ENCODE measurements at regions of chr12 and their contacts with region 1.

Region 1: GRCh38 chr12:116599285-116600136 is 40.3 kb downstream of the MAP1LC3B2 start:
- DNase-seq: peak; percentile 35
- H3K4me3 Mint-ChIP-seq: no peak overlapping the region
- H3K27ac Mint-ChIP-seq: no peak overlapping the region
- H3K4me1 Mint-ChIP-seq: peaks cover 42% of the 10 kb centered on the region
- H3K27me3 Mint-ChIP-seq: peaks cover 4% of the 10 kb centered on the region

Region 2: GRCh38 chr12:115998119-115998633 is 601.3 kb before region 1 on chr12:
- intact Hi-C with region 1: loop called (anchors 2 kb)
- DNase-seq: no peak
- H3K4me3 Mint-ChIP-seq: no peak overlapping the region
- H3K27ac Mint-ChIP-seq: no peak overlapping the region
- H3K4me1 Mint-ChIP-seq: no peaks in the 10 kb centered on the region
- H3K27me3 Mint-ChIP-seq: no peaks in the 10 kb centered on the region

Region 3: GRCh38 chr12:116142936-116143898 is 456.3 kb before region 1 on chr12:
- intact Hi-C with region 1: loop called (anchors 5 kb)
- DNase-seq: no peak
- H3K4me3 Mint-ChIP-seq: peak overlapping the region; percentile 45
- H3K27ac Mint-ChIP-seq: peak overlapping the region; percentile 81
- H3K4me1 Mint-ChIP-seq: peaks cover 52% of the 10 kb centered on the region
- H3K27me3 Mint-ChIP-seq: no peaks in the 10 kb centered on the region

Region 4: GRCh38 chr12:116497051-116497591 is 102.4 kb before region 1 on chr12:
- intact Hi-C with region 1: no loop called
- DNase-seq: no peak
- H3K4me3 Mint-ChIP-seq: no peak overlapping the region
- H3K27ac Mint-ChIP-seq: no peak overlapping the region
- H3K4me1 Mint-ChIP-seq: peaks cover 6% of the 10 kb centered on the region
- H3K27me3 Mint-ChIP-seq: peaks cover 3% of the 10 kb centered on the region

Region 5: DNA sequence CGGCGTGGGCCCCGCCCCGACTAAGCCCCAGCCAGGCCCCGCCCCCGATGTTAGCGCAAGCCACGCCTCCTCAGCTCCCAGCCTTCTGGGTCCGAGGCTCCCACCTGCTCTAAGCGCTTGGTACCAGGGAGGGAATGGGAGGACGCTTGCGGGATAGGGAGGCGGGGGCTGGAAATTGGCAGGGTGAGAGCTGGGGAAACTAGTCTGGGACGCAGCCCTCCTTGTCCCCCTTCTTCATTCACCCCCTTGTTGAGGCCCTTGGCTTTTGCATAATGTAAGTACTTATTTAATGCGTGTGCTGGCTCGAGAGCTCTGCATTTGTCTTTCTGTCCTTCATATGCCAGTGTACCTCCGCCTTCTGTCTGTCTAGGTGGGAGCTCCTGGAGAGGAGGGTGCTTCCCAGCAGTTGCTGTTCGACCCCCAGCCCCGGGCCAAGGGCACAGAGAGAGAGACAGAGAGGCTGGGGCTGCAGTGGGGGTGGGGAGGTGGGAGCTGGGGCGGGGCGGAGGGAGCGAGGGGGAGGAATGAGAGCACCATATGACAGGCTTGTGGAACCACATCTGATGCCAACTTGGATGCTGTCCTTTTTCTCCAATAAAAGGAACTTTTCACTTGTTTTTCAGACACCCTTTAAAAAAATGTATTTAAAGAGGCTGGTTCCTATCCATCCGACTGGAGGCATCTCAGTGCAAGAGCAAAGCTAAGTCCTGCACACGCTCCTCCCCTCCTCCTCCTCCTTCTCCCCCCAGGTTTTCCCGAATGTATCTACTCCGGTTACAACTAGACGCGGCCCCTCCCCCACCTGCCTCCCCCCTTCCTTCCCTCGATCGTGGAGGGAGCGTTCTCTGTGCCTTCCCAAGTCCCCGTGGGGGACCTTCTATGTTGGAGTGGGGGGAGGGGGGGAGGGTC is 65.9 kb before region 1 on chr12:
- intact Hi-C with region 1: loop called (anchors 10 kb)
- DNase-seq: peak; percentile 60
- H3K4me3 Mint-ChIP-seq: peak overlapping the region; percentile 89
- H3K27ac Mint-ChIP-seq: peak overlapping the region; percentile 75
- H3K4me1 Mint-ChIP-seq: peaks cover 41% of the 10 kb centered on the region
- H3K27me3 Mint-ChIP-seq: peaks cover 10% of the 10 kb centered on the region

Region 6: GRCh38 chr12:118409834-118410233 is 1810.3 kb after region 1 on chr12:
- intact Hi-C with region 1: no loop called
- DNase-seq: no peak
- H3K4me3 Mint-ChIP-seq: no peak overlapping the region
- H3K27ac Mint-ChIP-seq: no peak overlapping the region
- H3K4me1 Mint-ChIP-seq: no peaks in the 10 kb centered on the region
- H3K27me3 Mint-ChIP-seq: no peaks in the 10 kb centered on the region